Aorta (tissue), 5 donors: ENCODE measurements at regions of chr4 and their contacts with region 1.

Region 1: GRCh38 chr4:123396307-123397143 is at the start of gene SPRY1:
- DNase-seq: peak; percentile 91
- ATAC-seq: peak; percentile 85
- H3K4me3 ChIP-seq: peak within 1 kb of the TSS; percentile 77 to 81
- H3K27ac ChIP-seq: peak within 1 kb of the TSS; percentile 53 to 87
- H3K4me1 ChIP-seq: no peaks in the 10 kb centered on the region
- H3K27me3 ChIP-seq: no peaks in the 10 kb centered on the region
- total RNA-seq, gene SPRY1: 209 to 210 TPM

Region 2: DNA sequence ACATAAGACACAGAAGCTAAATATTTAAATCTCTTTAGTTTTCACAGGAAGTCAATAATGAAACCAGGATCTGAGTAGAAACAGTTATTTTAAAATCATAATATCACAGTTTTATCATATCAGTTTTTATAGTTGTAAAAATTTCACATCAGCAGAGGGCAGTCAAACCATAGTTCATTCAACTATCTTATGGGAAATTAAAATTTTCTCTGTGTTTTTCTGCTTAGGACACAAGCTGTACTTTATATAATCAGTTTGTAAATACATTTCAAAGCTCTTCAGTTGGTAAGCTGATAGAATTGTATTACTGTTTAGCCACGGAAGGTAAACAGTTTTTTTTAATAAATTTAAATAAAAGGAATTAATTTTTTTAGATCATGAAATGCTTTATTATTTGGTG is 269.3 kb before region 1 on chr4:
- intact Hi-C with region 1: loop called in 1 of 2 experiments (anchors 10 kb)
- DNase-seq: no peak
- ATAC-seq: no peak
- H3K4me3 ChIP-seq: no peak overlapping the region
- H3K27ac ChIP-seq: no peak overlapping the region
- H3K4me1 ChIP-seq: no peaks in the 10 kb centered on the region
- H3K27me3 ChIP-seq: no peaks in the 10 kb centered on the region

Region 3: GRCh38 chr4:123505095-123506010 is 108.8 kb after region 1 on chr4:
- intact Hi-C with region 1: loop called in 1 of 2 experiments (anchors 5 kb)
- DNase-seq: peak; percentile 75 to 85
- ATAC-seq: peak; percentile 78
- H3K4me3 ChIP-seq: peak overlapping the region; percentile 57 to 60
- H3K27ac ChIP-seq: no peak overlapping the region
- H3K4me1 ChIP-seq: peaks cover 0 to 1% of the 10 kb centered on the region in 2 donors
- H3K27me3 ChIP-seq: no peaks in the 10 kb centered on the region

Region 4: GRCh38 chr4:123564758-123565346 is 168.3 kb after region 1 on chr4:
- intact Hi-C with region 1: loop called in 1 of 2 experiments (anchors 5 kb)
- DNase-seq: no peak
- ATAC-seq: peak; percentile 77
- H3K4me3 ChIP-seq: no peak overlapping the region
- H3K27ac ChIP-seq: no peak overlapping the region
- H3K4me1 ChIP-seq: no peaks in the 10 kb centered on the region
- H3K27me3 ChIP-seq: no peaks in the 10 kb centered on the region

Region 5: GRCh38 chr4:123661080-123661737 is 264.7 kb after region 1 on chr4:
- intact Hi-C with region 1: loop called in 1 of 2 experiments (anchors 2 kb)
- DNase-seq: no peak
- ATAC-seq: no peak
- H3K4me3 ChIP-seq: no peak overlapping the region
- H3K27ac ChIP-seq: no peak overlapping the region
- H3K4me1 ChIP-seq: peaks cover 0 to 3% of the 10 kb centered on the region in 2 donors
- H3K27me3 ChIP-seq: no peaks in the 10 kb centered on the region

Region 6: GRCh38 chr4:123776254-123776653 is 379.7 kb after region 1 on chr4:
- intact Hi-C with region 1: no loop called
- DNase-seq: no peak
- ATAC-seq: no peak
- H3K4me3 ChIP-seq: no peak overlapping the region
- H3K27ac ChIP-seq: no peak overlapping the region
- H3K4me1 ChIP-seq: no peaks in the 10 kb centered on the region
- H3K27me3 ChIP-seq: no peaks in the 10 kb centered on the region